ENCODE measurements at regions of chr12 and their contacts with region 1.

Region 1: GRCh38 chr12:100234598-100235304 is 32.1 kb downstream of the DEPDC4 start:
- DNase-seq: peak; percentile 51
- H3K4me3 ChIP-seq: no peak overlapping the region
- H3K27ac ChIP-seq: peak overlapping the region; percentile 62
- H3K27me3 ChIP-seq: no peaks in the 10 kb centered on the region
- CTCF ChIP-seq: peak; percentile 83

Region 2: DNA sequence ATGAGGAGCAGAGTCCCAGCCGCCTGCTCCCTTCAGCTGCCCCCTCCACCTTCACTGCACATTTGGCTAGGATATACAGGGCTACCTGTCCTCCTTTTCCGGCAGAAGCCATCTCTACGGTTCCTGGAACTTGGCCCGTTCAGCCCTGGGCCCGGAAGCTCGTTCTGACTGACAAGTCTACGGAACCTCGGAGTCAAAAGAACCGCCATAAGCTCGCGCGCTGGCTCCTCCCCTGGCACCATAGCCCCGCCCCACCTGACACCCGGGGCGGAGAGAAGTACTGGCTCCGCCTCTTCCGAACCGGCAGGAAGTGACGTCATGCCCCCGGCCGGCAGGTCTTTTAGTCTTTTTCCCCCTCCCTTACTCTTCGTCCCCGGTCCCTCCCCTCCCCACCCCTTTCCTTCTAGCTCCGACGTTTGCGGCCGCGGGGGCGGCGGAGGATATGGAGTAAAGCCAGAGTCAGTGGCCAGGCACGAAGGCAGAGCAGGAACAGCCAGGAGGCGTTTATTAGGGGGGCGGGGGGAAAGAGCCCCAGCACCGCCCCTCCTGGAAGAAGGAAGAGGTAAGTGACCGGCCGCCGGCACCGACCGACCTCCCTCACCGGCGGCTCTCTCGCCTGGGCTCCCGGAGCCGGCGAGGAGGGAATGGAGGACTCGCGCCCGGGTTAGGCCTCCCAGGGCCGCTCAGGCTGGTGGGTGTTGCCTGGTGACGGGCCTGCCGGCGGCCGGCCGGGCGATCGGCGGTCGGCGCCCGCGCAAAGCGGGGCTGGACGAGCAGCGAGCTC is 32.3 kb after region 1 on chr12 and contains the starts of genes DEPDC4 and SCYL2:
- CTCF ChIA-PET with region 1: interaction called, 16 read pairs
- POLR2A ChIA-PET with region 1: interaction called, 3 read pairs
- DNase-seq: peak; percentile 97
- H3K4me3 ChIP-seq: peak within 1 kb of the TSS; percentile 94
- H3K27ac ChIP-seq: peak within 1 kb of the TSS; percentile 90
- H3K27me3 ChIP-seq: no peaks in the 10 kb centered on the region
- CTCF ChIP-seq: no peak
- polyA plus RNA-seq, gene DEPDC4: 0.76 and 1.3 TPM in 2 replicates
- polyA plus RNA-seq, gene SCYL2: 35.4 and 50.3 TPM in 2 replicates

Region 3: DNA sequence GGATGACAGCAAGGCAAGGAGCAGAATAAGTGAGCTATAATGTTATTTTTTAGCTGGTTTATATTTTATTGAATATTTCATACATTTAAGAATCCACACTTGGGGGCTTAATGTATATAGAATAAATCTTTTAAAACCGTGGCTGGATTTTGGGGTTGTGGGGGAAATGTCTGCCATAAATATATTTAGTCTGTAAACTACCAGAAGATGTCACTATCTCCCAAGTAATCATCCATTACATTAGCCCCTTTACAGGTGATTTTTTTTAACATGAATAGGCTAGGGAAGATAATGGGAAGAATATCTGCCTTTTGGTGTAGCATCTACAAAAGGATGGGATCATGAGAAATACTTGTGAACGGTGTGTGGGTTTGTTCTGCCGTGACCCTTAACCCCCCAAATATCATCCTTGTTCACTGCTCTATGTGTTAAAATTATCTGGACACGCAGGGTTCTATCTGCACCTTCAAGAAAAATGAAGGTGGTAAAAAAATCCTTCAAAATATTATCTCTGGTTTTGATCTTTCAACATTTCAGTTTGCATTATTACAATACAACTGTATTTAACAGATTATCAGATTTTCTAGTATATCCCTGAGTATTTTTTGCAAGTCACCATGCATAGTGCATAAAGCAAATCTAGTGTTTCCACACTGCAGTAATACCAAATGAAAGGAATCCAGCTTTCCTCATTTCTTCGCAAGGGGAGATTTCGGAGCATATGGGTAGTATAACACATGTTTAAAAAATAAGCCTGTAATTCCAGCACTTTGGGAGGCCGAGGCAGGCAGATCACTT is 114.1 kb after region 1 on chr12:
- CTCF ChIA-PET with region 1: interaction called, 11 read pairs
- POLR2A ChIA-PET with region 1: no interaction called
- DNase-seq: no peak
- H3K4me3 ChIP-seq: no peak overlapping the region
- H3K27ac ChIP-seq: no peak overlapping the region
- H3K27me3 ChIP-seq: peaks cover 3% of the 10 kb centered on the region
- CTCF ChIP-seq: peak; percentile 48

Region 4: GRCh38 chr12:100473716-100474150 is 239.0 kb after region 1 on chr12 and contains the start of gene NR1H4:
- CTCF ChIA-PET with region 1: no interaction called
- POLR2A ChIA-PET with region 1: no interaction called
- DNase-seq: peak; percentile 16
- H3K4me3 ChIP-seq: no peak within 1 kb of the TSS
- H3K27ac ChIP-seq: no peak within 1 kb of the TSS
- H3K27me3 ChIP-seq: peaks cover 2% of the 10 kb centered on the region
- CTCF ChIP-seq: no peak
- polyA plus RNA-seq, gene NR1H4: not detected in 2 replicates

Region 5: DNA sequence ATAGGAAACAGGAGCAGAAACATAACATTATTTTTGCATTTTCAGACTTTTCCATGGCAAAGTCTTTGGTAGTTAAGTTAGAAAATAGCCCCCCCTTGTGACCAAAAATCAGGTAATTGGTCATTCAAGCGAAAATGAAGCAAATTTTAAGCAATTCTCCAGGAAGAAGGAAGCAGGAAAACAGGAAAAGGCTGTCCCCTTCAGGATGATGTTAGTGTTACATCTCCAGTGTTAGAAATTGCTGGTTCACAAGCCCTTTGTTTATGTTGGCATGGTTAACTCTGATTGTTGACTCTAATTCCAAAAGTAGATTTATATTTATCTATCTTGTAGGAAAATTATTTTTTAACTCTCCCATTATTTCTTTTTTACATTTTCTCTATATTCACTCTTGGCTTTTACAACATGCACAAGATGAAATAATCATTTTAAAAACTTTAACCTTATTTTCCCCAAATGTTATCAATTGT is 319.9 kb after region 1 on chr12:
- CTCF ChIA-PET with region 1: interaction called, 63 read pairs
- POLR2A ChIA-PET with region 1: no interaction called
- DNase-seq: peak; percentile 72
- H3K4me3 ChIP-seq: no peak overlapping the region
- H3K27ac ChIP-seq: no peak overlapping the region
- H3K27me3 ChIP-seq: peaks cover 3% of the 10 kb centered on the region
- CTCF ChIP-seq: peak; percentile 93

Region 6: GRCh38 chr12:100733817-100734593 is 499.3 kb after region 1 on chr12:
- CTCF ChIA-PET with region 1: interaction called, 11 read pairs
- POLR2A ChIA-PET with region 1: no interaction called
- DNase-seq: peak; percentile 10
- H3K4me3 ChIP-seq: no peak overlapping the region
- H3K27ac ChIP-seq: no peak overlapping the region
- H3K27me3 ChIP-seq: no peaks in the 10 kb centered on the region
- CTCF ChIP-seq: peak; percentile 70